Left cardiac atrium (tissue), 4 donors: ENCODE measurements at regions of chr19 and their contacts with region 1.

Region 1: GRCh38 chr19:37803250-37803854 is 24.0 kb upstream of the ZNF573 start:
- DNase-seq: no peak
- ATAC-seq: no peak

Region 2: GRCh38 chr19:37683520-37683919 is 119.8 kb before region 1 on chr19:
- intact Hi-C with region 1: loop called in 1 of 2 experiments (anchors 5 kb)
- DNase-seq: no peak
- ATAC-seq: no peak

Region 3: DNA sequence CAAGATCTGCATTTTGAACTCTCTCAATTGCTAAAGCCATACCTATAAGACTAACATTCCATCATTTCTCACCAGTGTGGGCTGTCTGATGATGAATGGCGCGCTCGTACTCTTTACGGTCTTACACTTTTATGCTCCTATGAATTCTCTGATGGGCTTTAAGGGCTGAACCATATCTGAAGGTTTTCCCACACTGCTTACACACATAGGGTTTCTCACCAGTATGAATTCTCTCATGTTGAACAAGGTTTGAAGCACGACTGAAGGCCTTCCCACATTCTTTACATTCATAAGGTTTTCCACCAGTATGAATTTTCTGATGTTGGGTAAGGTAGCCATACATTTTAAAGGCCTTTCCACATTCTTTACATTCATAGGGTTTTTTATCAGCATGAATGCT is 65.0 kb before region 1 on chr19:
- intact Hi-C with region 1: no loop called
- DNase-seq: no peak
- ATAC-seq: no peak